Naive thymus-derived CD4-positive, alpha-beta T cell (primary cell): ENCODE measurements at regions of chr13 and their contacts with region 1.

Region 1: GRCh38 chr13:33204130-33204927 is 81.2 kb downstream of the STARD13 start:
- DNase-seq: no peak
- ATAC-seq: no peak
- H3K4me3 ChIP-seq: no peak overlapping the region
- H3K4me3 Mint-ChIP-seq: peak overlapping the region in 2 of 10 donors; percentile 11 to 73
- H3K27ac ChIP-seq: no peak overlapping the region
- H3K27ac Mint-ChIP-seq: peak overlapping the region in 1 of 9 donors; percentile 75
- H3K4me1 ChIP-seq: no peaks in the 10 kb centered on the region
- H3K4me1 Mint-ChIP-seq: peaks cover 8 to 59% (median 16%) of the 10 kb centered on the region in 7 donors
- H3K27me3 ChIP-seq: no peaks in the 10 kb centered on the region
- H3K27me3 Mint-ChIP-seq: peaks cover 0 to 31% (median 26%) of the 10 kb centered on the region in 5 donors

Region 2: DNA sequence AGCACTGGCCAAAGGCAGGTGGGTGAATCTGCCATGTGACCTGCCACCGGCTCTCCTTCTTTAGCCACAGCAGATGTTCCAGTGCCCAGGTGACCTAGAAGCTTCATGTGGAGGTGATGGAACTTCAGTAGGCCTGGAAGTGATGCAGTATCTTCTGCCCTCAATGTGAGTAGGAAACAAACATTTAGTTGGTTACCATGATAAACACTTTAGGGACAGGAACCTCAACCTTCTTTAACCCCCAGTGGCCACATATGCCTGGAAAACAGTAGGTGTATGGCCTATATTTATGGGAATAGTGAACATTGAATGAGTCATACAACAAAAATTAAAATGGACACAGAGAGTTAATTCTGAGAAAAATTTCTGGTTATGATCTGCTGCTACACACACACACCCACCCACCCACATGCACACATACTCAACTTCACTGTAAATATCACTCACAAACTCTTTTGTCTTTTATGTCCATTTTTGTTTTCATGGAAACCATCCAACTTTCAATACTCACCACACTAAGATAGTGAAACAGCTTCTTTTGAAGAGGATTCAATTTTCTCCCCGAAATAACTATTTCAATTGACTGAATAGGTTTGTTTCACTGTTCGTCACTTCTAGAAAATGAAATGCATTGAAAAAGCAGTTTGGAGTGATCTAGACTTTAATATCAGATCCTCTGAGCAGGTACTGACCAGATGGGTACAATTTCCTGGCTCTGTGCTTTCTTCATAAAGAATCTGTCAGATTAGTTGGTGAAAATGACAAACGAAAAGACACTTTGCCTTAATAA is 16.0 kb before region 1 on chr13:
- CTCF ChIA-PET with region 1: no interaction called
- POLR2A ChIA-PET with region 1: no interaction called
- intact Hi-C with region 1: loop called in 1 of 2 experiments (anchors 2 kb)
- DNase-seq: no peak
- ATAC-seq: no peak
- H3K4me3 ChIP-seq: no peak overlapping the region
- H3K4me3 Mint-ChIP-seq: peak overlapping the region in 1 of 10 donors; percentile 18
- H3K27ac ChIP-seq: no peak overlapping the region
- H3K27ac Mint-ChIP-seq: peak overlapping the region in 1 of 9 donors; percentile 61
- H3K4me1 ChIP-seq: no peaks in the 10 kb centered on the region
- H3K4me1 Mint-ChIP-seq: peaks cover 3 to 37% (median 8%) of the 10 kb centered on the region in 7 donors
- H3K27me3 ChIP-seq: no peaks in the 10 kb centered on the region
- H3K27me3 Mint-ChIP-seq: peaks cover 0 to 18% (median 11%) of the 10 kb centered on the region in 5 donors

Region 3: GRCh38 chr13:33228648-33229445 is 24.5 kb after region 1 on chr13:
- CTCF ChIA-PET with region 1: no interaction called
- POLR2A ChIA-PET with region 1: no interaction called
- intact Hi-C with region 1: loop called in 1 of 2 experiments (anchors 1 kb)
- DNase-seq: peak in 7 of 9 donors; percentile 4 to 49 (median 37)
- ATAC-seq: peak; percentile 75
- H3K4me3 ChIP-seq: no peak overlapping the region
- H3K4me3 Mint-ChIP-seq: no peak overlapping the region
- H3K27ac ChIP-seq: no peak overlapping the region
- H3K27ac Mint-ChIP-seq: peak overlapping the region in 1 of 9 donors; percentile 73
- H3K4me1 ChIP-seq: peaks cover 0 to 4% of the 10 kb centered on the region in 2 donors
- H3K4me1 Mint-ChIP-seq: peaks cover 0 to 8% (median 6%) of the 10 kb centered on the region in 7 donors
- H3K27me3 ChIP-seq: no peaks in the 10 kb centered on the region
- H3K27me3 Mint-ChIP-seq: peaks cover 0 to 5% (median 4%) of the 10 kb centered on the region in 5 donors